Ovary (tissue), 10 donors: ENCODE measurements at regions of chr18 and their contacts with region 1.

Region 1: GRCh38 chr18:68262690-68263294 is 452.1 kb downstream of the TMX3 start:
- DNase-seq: no peak
- H3K4me3 ChIP-seq: no peak overlapping the region
- H3K27ac ChIP-seq: no peak overlapping the region
- H3K4me1 ChIP-seq: no peaks in the 10 kb centered on the region
- H3K27me3 ChIP-seq: no peaks in the 10 kb centered on the region
- CTCF ChIP-seq: no peak
- EP300 ChIP-seq: no peak
- POLR2A ChIP-seq: no peak

Region 2: DNA sequence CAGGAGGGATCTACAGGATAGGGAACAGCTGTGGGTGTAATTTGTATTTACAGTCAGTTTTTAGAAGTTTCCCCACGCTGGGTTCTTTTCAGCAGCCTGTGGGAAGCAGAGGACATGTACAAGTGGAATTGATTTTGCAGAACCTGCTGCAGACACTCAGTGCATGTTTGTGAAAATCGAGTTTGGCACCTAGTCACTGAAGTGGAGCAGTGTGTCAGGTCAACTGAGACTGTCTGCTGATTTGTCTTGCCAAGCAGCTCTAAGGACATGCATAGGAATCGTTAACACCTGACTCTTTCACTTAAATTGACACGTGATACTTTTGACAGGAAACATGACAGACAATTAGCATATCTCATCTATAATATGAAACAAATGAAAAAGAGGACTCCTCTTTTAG is 35.5 kb after region 1 on chr18:
- intact Hi-C with region 1: loop called in 1 of 4 experiments (anchors 1 kb)
- DNase-seq: no peak
- H3K4me3 ChIP-seq: no peak overlapping the region
- H3K27ac ChIP-seq: no peak overlapping the region
- H3K4me1 ChIP-seq: no peaks in the 10 kb centered on the region
- H3K27me3 ChIP-seq: no peaks in the 10 kb centered on the region
- CTCF ChIP-seq: no peak
- EP300 ChIP-seq: no peak
- POLR2A ChIP-seq: no peak

Region 3: GRCh38 chr18:68699043-68699442 is 436.3 kb after region 1 on chr18:
- intact Hi-C with region 1: no loop called
- DNase-seq: no peak
- H3K4me3 ChIP-seq: no peak overlapping the region
- H3K27ac ChIP-seq: no peak overlapping the region
- H3K4me1 ChIP-seq: no peaks in the 10 kb centered on the region
- H3K27me3 ChIP-seq: no peaks in the 10 kb centered on the region
- CTCF ChIP-seq: no peak
- EP300 ChIP-seq: no peak
- POLR2A ChIP-seq: no peak